ENCODE measurements at regions of chr1 and their contacts with region 1.

Region 1: GRCh38 chr1:174022080-174022975 is at the start of gene RC3H1:
- DNase-seq: peak; percentile 77 to 96 (median 90)
- H3K4me3 ChIP-seq: peak within 1 kb of the TSS; percentile 64 to 99 (median 88)
- H3K27ac ChIP-seq: peak within 1 kb of the TSS; percentile 66 to 98 (median 95)
- H3K27me3 ChIP-seq: no peaks in the 10 kb centered on the region
- CTCF ChIP-seq: peak in 8 of 56 donors; percentile 14 to 51 (median 23)
- total RNA-seq, gene RC3H1: 32.3 to 65.7 (median 46.7) TPM

Region 2: DNA sequence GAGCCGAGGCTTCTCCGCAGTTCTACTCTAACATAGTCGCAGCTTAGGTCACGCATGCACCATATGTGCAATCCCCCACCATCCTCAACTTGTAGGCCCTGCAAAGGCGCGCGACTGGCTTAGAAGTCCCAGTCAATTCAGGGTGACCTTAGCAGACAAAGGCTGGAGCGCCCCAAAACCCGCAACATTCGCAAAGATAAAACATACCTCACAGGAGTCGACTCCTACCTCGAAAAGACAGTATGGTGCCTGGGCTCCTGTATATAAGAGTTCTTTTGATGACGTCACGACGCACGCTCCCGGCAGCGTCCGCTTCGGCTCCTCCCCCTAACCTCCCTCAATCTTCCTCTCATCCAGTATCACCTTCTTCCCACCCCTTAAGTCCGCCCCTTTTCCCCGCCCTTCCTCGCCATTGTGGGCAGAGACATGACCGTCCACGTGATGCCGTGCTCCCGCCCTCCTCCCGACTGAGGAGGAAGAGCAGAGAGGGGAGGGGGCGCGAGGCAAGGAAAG is 154.5 kb before region 1 on chr1 and contains the start of gene GAS5:
- intact Hi-C with region 1: loop called (anchors 5 to 10 kb)
- DNase-seq: peak; percentile 91 to 99 (median 98)
- H3K4me3 ChIP-seq: peak within 1 kb of the TSS; percentile 64 to 99 (median 91)
- H3K27ac ChIP-seq: peak within 1 kb of the TSS; percentile 83 to 99 (median 97)
- H3K27me3 ChIP-seq: no peaks in the 10 kb centered on the region
- CTCF ChIP-seq: peak in 9 of 56 donors; percentile 1 to 33 (median 22)
- total RNA-seq, gene GAS5: 88.6 to 204 (median 118) TPM

Region 3: GRCh38 chr1:174051956-174052355 is 29.6 kb after region 1 on chr1:
- intact Hi-C with region 1: loop called in 1 of 2 experiments (anchors 1 kb)
- DNase-seq: peak in 8 of 10 donors; percentile 45 to 86 (median 67)
- H3K4me3 ChIP-seq: peak overlapping the region in 53 of 59 donors; percentile 1 to 64 (median 36)
- H3K27ac ChIP-seq: peak overlapping the region in 58 of 59 donors; percentile 31 to 96 (median 88)
- H3K27me3 ChIP-seq: no peaks in the 10 kb centered on the region
- CTCF ChIP-seq: peak in 7 of 56 donors; percentile 7 to 23 (median 15)

Region 4: DNA sequence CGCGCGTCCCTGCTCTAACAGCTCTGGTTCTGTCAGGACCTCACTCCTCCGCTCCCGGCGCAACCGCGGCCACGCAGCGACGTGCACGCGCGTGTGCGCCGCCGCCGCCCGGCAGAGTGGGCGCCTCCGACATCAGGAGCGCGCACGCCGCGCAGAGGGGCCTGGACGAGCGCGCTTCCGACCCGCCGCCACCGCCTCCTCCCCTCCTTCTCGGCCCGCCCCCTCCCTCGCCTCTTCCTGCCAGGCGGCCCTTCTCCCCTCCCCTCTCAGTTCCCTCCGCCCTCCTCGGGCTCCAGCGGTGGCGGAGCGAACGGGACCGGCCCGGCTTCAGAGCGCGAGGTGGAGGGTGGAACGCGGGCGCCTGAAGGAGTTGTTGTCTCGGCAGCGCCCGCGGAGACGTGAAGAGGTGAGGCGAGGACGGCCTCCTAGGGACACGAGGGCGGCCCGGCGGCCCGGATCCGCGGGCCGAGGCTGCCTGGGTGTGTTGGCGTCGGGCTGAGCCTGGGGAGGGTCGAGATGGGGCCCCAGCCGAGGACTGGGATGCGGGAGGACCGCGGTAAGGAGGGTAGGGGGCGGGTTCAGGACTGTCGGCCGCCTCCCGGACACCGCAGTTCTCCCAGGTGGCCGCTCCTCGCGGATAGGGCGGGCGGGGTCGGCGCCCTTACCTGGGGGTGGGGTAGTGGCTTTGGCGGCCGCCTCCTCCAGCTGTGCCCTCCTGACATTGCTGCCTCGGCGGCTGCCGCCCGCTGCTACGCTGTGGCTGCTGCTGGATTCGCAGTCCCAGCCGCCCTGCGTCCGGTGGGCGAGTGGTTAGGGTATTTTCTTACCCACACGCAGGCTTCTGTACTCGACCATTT is 137.2 kb after region 1 on chr1 and contains the start of gene RABGAP1L:
- intact Hi-C with region 1: loop called in 1 of 2 experiments (anchors 5 kb)
- DNase-seq: peak; percentile 75 to 93 (median 89)
- H3K4me3 ChIP-seq: peak within 1 kb of the TSS; percentile 73 to 100 (median 95)
- H3K27ac ChIP-seq: peak within 1 kb of the TSS in 58 of 59 donors; percentile 27 to 97 (median 88)
- H3K27me3 ChIP-seq: no peaks in the 10 kb centered on the region
- CTCF ChIP-seq: peak in 42 of 56 donors; percentile 4 to 63 (median 26)
- total RNA-seq, gene RABGAP1L: 48.6 to 148 (median 111) TPM

Measured in dorsolateral prefrontal cortex (tissue), 120 donors.